ENCODE measurements at regions of chrX and their contacts with region 1.

Region 1: GRCh38 chrX:107716816-107717700 is 58.5 kb downstream of the TSC22D3 start:
- DNase-seq: peak; percentile 60
- H3K4me3 ChIP-seq: peak overlapping the region; percentile 55
- H3K27ac ChIP-seq: peak overlapping the region; percentile 68
- H3K4me1 ChIP-seq: peaks cover 4% of the 10 kb centered on the region
- H3K27me3 ChIP-seq: no peaks in the 10 kb centered on the region
- CTCF ChIP-seq: no peak

Region 2: DNA sequence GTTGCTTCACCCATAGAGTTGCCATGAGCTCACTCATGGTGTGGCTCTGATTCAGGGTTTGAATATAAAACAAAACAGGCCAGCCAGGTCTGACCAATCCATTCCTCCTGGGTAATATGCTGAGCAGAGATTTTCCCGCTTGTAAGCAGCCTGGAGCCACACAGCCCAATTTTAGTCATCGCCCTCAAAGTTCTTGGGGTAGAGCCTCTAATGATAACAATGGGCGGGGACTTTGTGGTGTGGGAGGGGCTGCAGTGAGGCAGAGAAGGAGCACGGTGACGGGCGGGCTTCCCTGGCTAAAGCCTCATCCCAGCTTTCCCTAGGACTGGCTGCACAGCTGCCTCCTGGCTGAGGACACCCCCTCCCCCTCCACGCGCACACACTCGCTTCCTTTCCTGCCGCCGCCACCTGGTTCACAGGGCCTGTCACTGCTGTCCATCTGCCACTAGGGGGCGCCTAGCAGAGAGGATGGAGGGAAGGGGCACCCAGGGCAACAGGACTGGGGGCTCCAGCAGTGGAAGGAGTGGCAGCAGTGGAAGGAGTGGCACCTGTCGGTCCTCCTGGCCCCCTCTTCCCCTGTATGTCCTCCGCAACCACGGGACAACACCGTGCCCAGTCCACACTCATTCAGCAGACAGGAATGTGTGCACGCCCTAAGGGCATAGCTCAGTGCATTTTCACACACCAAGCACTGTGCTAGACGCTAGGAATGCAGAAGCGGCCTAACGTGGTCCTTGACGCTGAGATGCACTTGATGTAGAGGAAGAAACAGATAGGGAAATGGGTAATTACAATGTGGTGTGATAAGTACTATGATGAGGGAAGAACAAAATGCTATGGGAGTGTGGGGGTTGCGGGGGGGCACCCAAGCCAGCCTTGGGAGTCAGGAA is 61.9 kb before region 1 on chrX:
- CTCF ChIA-PET with region 1: no interaction called
- POLR2A ChIA-PET with region 1: no interaction called
- intact Hi-C with region 1: loop called (anchors 5 kb)
- DNase-seq: peak; percentile 65
- H3K4me3 ChIP-seq: no peak overlapping the region
- H3K27ac ChIP-seq: no peak overlapping the region
- H3K4me1 ChIP-seq: no peaks in the 10 kb centered on the region
- H3K27me3 ChIP-seq: no peaks in the 10 kb centered on the region
- CTCF ChIP-seq: peak; percentile 85

Region 3: GRCh38 chrX:107672955-107673378 is 44.1 kb before region 1 on chrX:
- CTCF ChIA-PET with region 1: interaction called, 5 read pairs
- POLR2A ChIA-PET with region 1: interaction called, 5 read pairs
- intact Hi-C with region 1: loop called (anchors 5 kb)
- DNase-seq: peak; percentile 63
- H3K4me3 ChIP-seq: no peak overlapping the region
- H3K27ac ChIP-seq: no peak overlapping the region
- H3K4me1 ChIP-seq: peaks cover 26% of the 10 kb centered on the region
- H3K27me3 ChIP-seq: peaks cover 6% of the 10 kb centered on the region
- CTCF ChIP-seq: peak; percentile 70

Measured in A673 (cell line).